MCF 10A (cell line): ENCODE measurements at regions of chr9 and their contacts with region 1.

Region 1: GRCh38 chr9:124852829-124853531 is at the start of gene WDR38:
- DNase-seq: peak; percentile 80
- H3K4me3 Mint-ChIP-seq: peak within 1 kb of the TSS; percentile 54
- H3K27ac Mint-ChIP-seq: no peak within 1 kb of the TSS
- H3K4me1 Mint-ChIP-seq: peaks cover 6% of the 10 kb centered on the region
- H3K27me3 Mint-ChIP-seq: no peaks in the 10 kb centered on the region
- CTCF ChIP-seq: peak; percentile 99
- total RNA-seq, gene WDR38: not detected in 2 replicates

Region 2: DNA sequence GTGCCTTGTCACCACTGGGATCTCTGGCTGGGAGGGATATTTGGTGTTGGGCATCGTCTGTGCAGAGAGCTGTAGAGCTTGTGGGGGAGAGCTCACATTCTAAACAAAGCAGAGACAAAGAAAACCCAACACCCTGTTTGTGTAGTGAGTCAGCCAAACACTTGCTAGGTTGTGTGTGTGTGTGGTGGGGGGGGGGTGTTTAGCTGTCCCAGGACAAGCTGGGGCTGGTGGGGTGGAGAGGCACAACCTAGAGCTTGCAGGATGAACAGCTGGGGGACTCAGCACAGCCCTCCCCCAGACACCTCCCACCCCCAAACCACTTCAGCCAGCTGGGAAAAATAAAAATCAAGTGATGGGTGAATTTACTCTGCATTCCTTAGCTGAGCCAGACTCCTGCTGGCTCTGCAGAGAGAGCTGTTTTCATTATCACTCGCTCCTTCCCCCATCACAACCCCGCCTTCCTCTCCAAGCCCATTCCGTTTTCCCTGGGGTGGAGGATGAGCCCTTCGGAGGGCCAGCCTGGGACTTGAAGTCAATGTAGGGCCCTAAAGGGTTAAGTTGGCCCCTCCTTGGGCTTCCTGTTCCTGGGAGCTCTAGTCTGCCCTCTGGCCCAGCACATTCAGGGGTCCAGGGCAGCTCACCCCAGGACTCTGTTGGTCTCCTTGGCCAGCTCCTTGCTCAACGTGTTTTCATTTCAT is 73.5 kb before region 1 on chr9:
- CTCF ChIA-PET with region 1: interaction called, 927 read pairs
- POLR2A ChIA-PET with region 1: interaction called, 299 read pairs
- intact Hi-C with region 1: loop called (anchors 1 kb)
- DNase-seq: peak; percentile 78
- H3K4me3 Mint-ChIP-seq: no peak overlapping the region
- H3K27ac Mint-ChIP-seq: peak overlapping the region; percentile 63
- H3K4me1 Mint-ChIP-seq: peaks cover 27% of the 10 kb centered on the region
- H3K27me3 Mint-ChIP-seq: peaks cover 9% of the 10 kb centered on the region
- CTCF ChIP-seq: no peak

Region 3: DNA sequence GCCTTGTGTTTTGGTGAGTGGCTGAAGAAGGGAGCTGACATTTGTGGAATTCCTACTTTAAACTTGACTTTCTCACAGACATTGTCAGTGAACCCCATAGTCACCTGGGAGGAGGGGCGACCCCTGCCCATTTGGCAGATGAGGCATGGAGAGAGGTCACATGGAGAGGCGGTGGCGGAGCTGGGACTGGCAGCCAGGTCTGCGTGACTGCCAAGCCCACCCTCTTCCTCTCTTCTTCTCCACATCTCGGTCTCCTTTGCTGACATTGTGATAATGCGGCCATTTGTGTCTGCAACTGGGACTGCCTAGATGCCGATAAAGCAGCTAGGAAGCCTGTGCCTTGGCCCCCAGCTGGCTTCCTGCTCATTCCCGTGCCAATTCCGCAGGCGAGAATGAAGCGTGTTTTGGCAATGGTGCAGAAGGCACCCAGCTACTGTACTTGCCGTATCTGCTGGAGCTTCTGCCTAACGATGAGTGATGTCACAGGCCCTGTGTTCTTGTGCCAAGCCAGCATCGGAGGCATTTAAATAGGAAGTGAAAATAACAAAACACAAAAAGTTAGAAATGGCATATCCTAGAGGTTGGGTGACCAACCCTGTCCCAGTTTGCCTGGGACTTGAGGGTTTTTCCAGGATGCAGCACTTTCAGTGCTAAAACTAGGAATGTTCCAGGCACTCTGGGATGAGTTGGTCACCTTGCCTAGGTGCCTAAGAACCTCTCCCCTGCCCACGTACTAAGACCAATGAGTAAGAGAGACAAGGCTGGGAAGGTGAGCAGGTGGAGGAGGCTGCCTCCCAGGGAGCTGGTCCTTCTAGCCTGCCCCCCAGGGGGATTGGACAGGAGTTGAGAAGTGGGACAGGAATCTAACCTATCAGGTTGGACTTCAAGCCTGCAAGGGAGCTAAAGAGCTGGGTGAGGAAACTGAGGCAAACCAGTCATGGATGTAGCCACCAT is 52.4 kb before region 1 on chr9:
- CTCF ChIA-PET with region 1: interaction called, 64 read pairs
- POLR2A ChIA-PET with region 1: interaction called, 5 read pairs
- intact Hi-C with region 1: no loop called
- DNase-seq: peak; percentile 45
- H3K4me3 Mint-ChIP-seq: no peak overlapping the region
- H3K27ac Mint-ChIP-seq: no peak overlapping the region
- H3K4me1 Mint-ChIP-seq: no peaks in the 10 kb centered on the region
- H3K27me3 Mint-ChIP-seq: no peaks in the 10 kb centered on the region
- CTCF ChIP-seq: no peak

Region 4: GRCh38 chr9:124818431-124819281 is 34.3 kb before region 1 on chr9:
- CTCF ChIA-PET with region 1: interaction called, 50 read pairs
- POLR2A ChIA-PET with region 1: interaction called, 11 read pairs
- intact Hi-C with region 1: loop called (anchors 5 kb)
- DNase-seq: peak; percentile 78
- H3K4me3 Mint-ChIP-seq: peak overlapping the region; percentile 15
- H3K27ac Mint-ChIP-seq: peak overlapping the region; percentile 89
- H3K4me1 Mint-ChIP-seq: peaks cover 19% of the 10 kb centered on the region
- H3K27me3 Mint-ChIP-seq: no peaks in the 10 kb centered on the region
- CTCF ChIP-seq: no peak

Region 5: DNA sequence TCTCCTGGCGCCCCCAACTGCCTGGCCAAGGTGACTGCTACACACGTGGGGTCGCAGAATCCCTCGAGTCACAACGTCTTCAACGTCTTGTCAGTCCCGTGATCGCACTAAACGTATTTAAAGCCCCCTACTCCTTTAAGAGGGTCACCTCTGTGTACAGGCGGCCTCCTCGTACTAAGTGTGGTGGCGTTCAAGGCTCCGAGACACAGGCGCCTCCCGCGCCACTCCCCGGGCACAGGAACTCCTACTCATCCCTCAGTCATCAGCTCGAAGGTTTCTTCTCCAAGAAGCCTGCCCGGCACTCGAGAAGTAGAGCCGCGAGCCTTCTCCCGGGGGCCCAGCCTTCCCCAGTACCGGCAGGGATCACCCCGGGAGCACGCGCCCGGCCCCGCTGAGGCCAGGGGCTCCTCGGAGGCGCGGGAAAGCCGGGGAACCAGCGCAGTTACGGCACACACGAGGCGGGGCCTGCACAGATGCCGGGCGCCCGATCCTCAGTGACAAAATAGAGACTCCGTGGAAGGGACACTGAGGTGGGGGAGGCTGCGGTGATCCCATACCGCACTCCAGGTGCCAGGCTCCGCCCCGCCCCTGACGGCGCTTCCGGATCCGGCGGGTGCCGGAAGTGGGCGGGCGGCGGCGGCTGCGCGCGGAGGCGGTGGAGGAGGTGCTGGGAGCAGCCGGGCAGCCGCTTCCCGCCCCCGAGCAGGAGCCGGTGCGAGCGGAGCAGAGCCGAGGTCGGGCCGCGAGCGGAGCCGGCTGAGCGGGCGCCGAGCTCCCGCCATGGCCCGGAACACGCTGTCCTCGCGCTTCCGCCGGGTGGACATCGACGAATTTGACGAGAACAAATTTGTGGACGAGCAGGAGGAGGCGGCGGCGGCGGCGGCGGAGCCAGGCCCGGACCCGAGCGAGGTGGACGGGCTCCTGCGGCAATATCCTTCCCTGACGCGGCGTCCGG is 15.8 kb after region 1 on chr9:
- CTCF ChIA-PET with region 1: interaction called, 5 read pairs
- POLR2A ChIA-PET with region 1: interaction called, 30 read pairs
- intact Hi-C with region 1: no loop called
- DNase-seq: peak; percentile 86
- H3K4me3 Mint-ChIP-seq: peak overlapping the region; percentile 95
- H3K27ac Mint-ChIP-seq: peak overlapping the region; percentile 97
- H3K4me1 Mint-ChIP-seq: peaks cover 33% of the 10 kb centered on the region
- H3K27me3 Mint-ChIP-seq: no peaks in the 10 kb centered on the region
- CTCF ChIP-seq: no peak